H1 (cell line): ENCODE measurements at regions of chr11 and their contacts with region 1.

Region 1: GRCh38 chr11:69253028-69253427 is 40.9 kb upstream of the MYEOV start:
- DNase-seq: no peak
- H3K4me3 ChIP-seq: no peak overlapping the region
- H3K27ac ChIP-seq: no peak overlapping the region
- H3K4me1 ChIP-seq: peaks cover 11 to 22% (median 13%) of the 10 kb centered on the region in 4 experiments
- H3K27me3 ChIP-seq: peaks cover 0 to 15% (median 9%) of the 10 kb centered on the region in 4 experiments; a peak in 6 of 7 replicates
- CTCF ChIP-seq: no peak
- EP300 ChIP-seq: no peak
- POLR2A ChIP-seq: no peak
- RAD21 ChIP-seq: no peak

Region 2: DNA sequence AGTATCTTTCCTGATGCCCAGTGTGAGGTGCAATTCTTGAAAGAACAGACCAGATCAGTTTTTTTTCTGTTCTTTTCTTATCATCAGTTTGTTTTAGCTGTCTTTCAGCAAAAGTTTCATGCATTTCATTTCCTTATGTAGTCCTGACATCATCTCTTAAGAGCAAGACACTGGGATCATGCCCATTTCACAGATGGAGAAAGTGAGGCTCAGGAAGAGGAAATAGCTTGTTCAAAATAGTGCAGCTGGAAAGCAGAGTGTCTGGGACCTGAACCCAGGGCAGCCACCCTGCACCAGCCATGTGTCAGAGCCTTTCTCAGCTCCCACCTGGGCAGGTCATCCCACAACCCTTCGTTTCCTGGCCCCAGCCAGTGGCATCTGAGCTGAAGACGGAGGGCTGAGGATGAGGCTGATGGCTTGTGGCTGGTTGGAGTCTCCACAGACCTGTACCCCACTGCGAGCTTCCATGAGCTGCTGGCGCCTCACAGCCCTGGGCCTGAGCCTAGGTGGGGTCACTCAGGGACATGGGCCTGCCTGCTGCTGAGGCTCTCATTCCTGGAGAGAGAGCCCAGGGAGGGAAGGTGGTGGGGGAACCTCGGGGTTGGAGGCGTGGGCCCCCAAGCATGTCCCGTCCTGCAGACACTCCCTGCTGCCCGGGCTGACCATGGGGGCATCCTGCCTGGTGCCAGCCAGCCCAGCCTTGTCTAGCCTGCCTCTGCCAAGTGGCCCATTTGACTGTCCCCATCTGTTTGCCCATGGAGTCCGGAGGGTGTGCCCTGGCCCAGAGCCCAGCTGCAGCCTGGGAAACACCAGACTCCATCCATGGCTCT is 35.5 kb before region 1 on chr11:
- CTCF ChIA-PET with region 1: no interaction called
- POLR2A ChIA-PET with region 1: no interaction called
- DNase-seq: peak in 1 of 2 experiments; percentile 19
- H3K4me3 ChIP-seq: no peak overlapping the region
- H3K27ac ChIP-seq: no peak overlapping the region
- H3K4me1 ChIP-seq: no peaks in the 10 kb centered on the region
- H3K27me3 ChIP-seq: no peaks in the 10 kb centered on the region; a peak in 1 of 7 replicates
- CTCF ChIP-seq: no peak
- EP300 ChIP-seq: no peak
- POLR2A ChIP-seq: no peak
- RAD21 ChIP-seq: no peak

Region 3: DNA sequence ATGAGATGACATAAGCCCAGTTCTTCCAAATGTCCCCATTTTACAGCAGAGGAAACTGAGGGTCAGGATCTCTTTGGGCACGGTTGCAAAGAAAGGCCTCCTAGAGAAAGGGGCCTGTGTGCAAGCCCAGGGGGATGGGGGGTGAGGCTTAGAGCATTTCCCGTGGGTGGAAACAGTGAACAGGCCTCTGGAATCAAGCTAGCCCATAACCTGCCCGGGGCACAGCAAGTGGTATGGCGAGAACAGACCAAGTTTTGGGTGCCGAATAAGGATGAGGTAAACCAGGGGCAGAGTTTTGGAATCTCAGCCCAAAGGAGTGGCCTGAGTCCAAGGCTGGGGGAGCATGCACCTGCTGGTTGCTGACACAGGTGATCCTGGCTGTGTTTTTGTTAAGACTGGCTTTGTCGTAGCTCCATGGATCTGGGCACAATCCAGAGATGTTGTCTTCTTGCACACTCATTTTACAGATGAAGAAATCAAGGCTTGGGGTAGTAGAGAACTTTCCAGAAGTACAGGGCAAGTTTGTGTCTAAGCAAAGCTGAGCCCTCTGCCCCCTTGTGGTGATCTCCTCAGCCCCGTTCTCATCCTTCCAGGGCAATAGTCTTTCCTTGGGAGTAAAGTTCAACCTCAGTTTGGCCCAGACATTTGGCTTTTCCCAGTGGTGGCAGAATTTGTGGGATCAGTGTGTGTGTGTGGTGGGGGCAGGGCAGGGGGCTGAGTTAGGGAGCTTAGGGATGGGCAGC is 12.5 kb before region 1 on chr11:
- CTCF ChIA-PET with region 1: interaction called, 21 read pairs
- POLR2A ChIA-PET with region 1: no interaction called
- DNase-seq: no peak
- H3K4me3 ChIP-seq: no peak overlapping the region
- H3K27ac ChIP-seq: no peak overlapping the region
- H3K4me1 ChIP-seq: no peaks in the 10 kb centered on the region
- H3K27me3 ChIP-seq: no peaks in the 10 kb centered on the region
- CTCF ChIP-seq: peak; percentile 48 to 70 (median 60)
- EP300 ChIP-seq: no peak
- POLR2A ChIP-seq: no peak
- RAD21 ChIP-seq: peak; percentile 48 to 66